ENCODE measurements at regions of chr10 and their contacts with region 1.

Region 1: DNA sequence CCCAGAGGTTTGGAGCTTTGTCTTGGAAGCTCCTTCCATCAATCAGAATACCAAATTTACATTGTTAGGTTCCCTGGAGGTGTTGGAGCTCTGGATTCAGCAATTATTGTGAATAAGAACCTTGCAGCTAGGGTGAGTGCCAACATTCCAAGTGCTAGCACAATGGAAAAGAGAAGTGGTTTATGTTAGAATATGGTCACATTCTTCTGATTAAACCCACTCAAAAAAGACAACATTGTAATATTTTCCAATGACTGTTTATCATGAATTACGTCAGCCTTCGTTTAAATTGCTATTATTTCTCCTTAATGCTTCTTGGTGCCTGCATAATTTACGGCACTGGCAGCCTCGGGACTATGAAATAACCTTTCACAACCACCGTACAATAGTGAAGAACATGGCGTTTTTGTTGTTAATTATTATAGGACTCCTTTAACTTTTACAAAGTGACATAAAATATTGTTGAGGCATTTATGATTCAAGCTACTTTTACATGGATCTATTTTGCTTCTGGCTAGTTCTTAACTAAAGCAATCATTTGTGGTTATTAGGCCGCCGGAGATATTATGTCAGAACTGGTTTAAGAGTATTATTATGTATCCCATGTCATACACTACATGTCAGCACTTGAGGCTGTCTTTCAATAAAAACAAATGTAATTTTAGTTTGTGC is 117.7 kb downstream of the ARID5B start:
- DNase-seq: no peak
- ATAC-seq: no peak
- H3K4me3 ChIP-seq: no peak overlapping the region
- H3K27ac ChIP-seq: peak overlapping the region; percentile 55; the same call in 1 of the 2 replicates
- H3K4me1 ChIP-seq: peaks cover 50% of the 10 kb centered on the region
- H3K27me3 ChIP-seq: no peaks in the 10 kb centered on the region
- CTCF ChIP-seq: no peak

Region 2: GRCh38 chr10:61628875-61629513 is 390.2 kb before region 1 on chr10:
- CTCF ChIA-PET with region 1: no interaction called
- POLR2A ChIA-PET with region 1: interaction called, 11 read pairs
- in situ Hi-C with region 1: no loop called
- intact Hi-C with region 1: no loop called
- DNase-seq: peak; percentile 74
- ATAC-seq: peak; percentile 87
- H3K4me3 ChIP-seq: no peak overlapping the region
- H3K27ac ChIP-seq: peak overlapping the region; percentile 65
- H3K4me1 ChIP-seq: peaks cover 20% of the 10 kb centered on the region
- H3K27me3 ChIP-seq: no peaks in the 10 kb centered on the region
- CTCF ChIP-seq: no peak

Measured in Panc1 (cell line).